ENCODE measurements at regions of chr1 and their contacts with region 1.

Region 1: GRCh38 chr1:148334339-148335130 is 148.6 kb downstream of the PPIAL4G start:
- DNase-seq: peak; percentile 99
- H3K4me3 Mint-ChIP-seq: peak overlapping the region; percentile 91
- H3K27ac Mint-ChIP-seq: peak overlapping the region; percentile 100
- H3K4me1 Mint-ChIP-seq: peaks cover 10% of the 10 kb centered on the region
- H3K27me3 Mint-ChIP-seq: no peaks in the 10 kb centered on the region
- CTCF ChIP-seq: no peak

Region 2: DNA sequence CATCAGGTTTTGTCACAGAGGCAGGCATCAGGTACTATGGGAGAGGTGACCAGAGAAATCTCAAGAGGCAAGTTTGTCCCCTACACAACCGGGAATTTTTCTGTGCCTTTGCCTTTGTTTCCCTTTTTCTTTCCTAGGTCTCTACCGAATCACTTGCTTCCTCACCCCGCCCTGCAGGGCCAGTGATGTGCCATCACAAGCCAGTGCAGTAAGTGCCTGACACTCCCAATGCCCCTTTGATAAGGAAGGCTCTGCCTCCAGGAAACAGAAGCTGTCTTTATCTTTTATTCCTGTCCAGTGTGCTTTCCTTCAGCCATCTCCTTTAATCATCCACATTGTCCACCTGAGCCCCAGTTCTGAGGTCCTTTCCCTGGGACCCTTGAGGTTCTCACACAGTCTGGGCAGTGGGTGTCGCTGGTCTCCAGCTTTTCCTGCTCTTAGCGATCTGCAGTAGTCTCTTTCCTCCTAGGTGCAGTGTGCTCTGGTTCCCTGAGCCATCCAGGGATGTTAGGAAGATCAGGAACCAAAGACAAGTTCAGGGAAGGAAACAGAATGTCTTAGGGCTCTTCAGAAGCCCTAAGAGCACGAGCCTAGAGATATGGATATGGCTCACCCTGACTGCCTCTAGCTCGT is 610.7 kb before region 1 on chr1:
- CTCF ChIA-PET with region 1: no interaction called
- POLR2A ChIA-PET with region 1: no interaction called
- intact Hi-C with region 1: no loop called
- DNase-seq: peak; percentile 72
- H3K4me3 Mint-ChIP-seq: no peak overlapping the region
- H3K27ac Mint-ChIP-seq: no peak overlapping the region
- H3K4me1 Mint-ChIP-seq: peaks cover 16% of the 10 kb centered on the region
- H3K27me3 Mint-ChIP-seq: no peaks in the 10 kb centered on the region
- CTCF ChIP-seq: peak; percentile 51

Region 3: DNA sequence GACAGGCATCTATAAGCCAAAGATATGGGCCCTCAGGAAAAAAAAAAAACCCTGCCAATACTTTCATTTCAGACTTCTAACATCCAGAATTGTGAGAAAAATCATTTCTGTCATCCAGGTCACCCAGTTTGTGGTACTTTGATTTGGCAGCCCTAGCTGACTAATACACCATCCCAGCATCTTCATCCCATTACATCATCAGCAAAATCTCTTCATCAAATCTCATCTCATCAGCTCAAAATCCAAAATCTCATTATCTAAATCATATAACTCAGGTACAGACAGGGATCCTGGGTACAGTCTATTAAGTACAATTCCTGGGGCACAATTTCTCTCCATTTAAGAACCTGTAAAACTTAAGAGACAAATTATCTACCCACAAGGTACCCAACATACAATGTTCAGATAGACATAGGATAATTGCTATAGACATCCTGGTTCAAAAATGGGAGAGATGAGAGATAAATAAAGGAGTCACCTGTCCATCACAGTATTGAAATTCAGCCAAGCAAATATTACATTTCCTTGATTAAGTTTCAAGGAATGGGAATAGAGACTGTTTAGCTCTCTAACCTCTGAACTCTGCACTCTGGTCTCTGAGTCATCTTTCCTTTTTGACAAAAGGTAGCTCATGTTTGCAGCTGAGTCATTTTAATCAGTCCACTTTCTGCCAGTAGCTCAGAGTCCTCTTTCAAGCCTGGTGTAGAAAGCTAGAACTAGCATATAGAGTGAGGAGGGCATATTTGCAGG is 483.6 kb before region 1 on chr1:
- CTCF ChIA-PET with region 1: no interaction called
- POLR2A ChIA-PET with region 1: no interaction called
- intact Hi-C with region 1: no loop called
- DNase-seq: peak; percentile 43
- H3K4me3 Mint-ChIP-seq: no peak overlapping the region
- H3K27ac Mint-ChIP-seq: no peak overlapping the region
- H3K4me1 Mint-ChIP-seq: peaks cover 8% of the 10 kb centered on the region
- H3K27me3 Mint-ChIP-seq: no peaks in the 10 kb centered on the region
- CTCF ChIP-seq: no peak

Region 4: GRCh38 chr1:148160343-148161052 is 174.0 kb before region 1 on chr1:
- CTCF ChIA-PET with region 1: no interaction called
- POLR2A ChIA-PET with region 1: no interaction called
- intact Hi-C with region 1: no loop called
- DNase-seq: no peak
- H3K4me3 Mint-ChIP-seq: no peak overlapping the region
- H3K27ac Mint-ChIP-seq: no peak overlapping the region
- H3K4me1 Mint-ChIP-seq: no peaks in the 10 kb centered on the region
- H3K27me3 Mint-ChIP-seq: peaks cover 32% of the 10 kb centered on the region
- CTCF ChIP-seq: no peak

Region 5: GRCh38 chr1:148263128-148263905 is 71.2 kb before region 1 on chr1:
- CTCF ChIA-PET with region 1: no interaction called
- POLR2A ChIA-PET with region 1: interaction called, 45 read pairs
- intact Hi-C with region 1: loop called (anchors 1 kb)
- DNase-seq: peak; percentile 99
- H3K4me3 Mint-ChIP-seq: peak overlapping the region; percentile 82
- H3K27ac Mint-ChIP-seq: peak overlapping the region; percentile 99
- H3K4me1 Mint-ChIP-seq: peaks cover 13% of the 10 kb centered on the region
- H3K27me3 Mint-ChIP-seq: no peaks in the 10 kb centered on the region
- CTCF ChIP-seq: no peak

Region 6: GRCh38 chr1:148272901-148273300 is 61.6 kb before region 1 on chr1:
- CTCF ChIA-PET with region 1: interaction called, 4 read pairs
- POLR2A ChIA-PET with region 1: interaction called, 16 read pairs
- intact Hi-C with region 1: no loop called
- DNase-seq: no peak
- H3K4me3 Mint-ChIP-seq: no peak overlapping the region
- H3K27ac Mint-ChIP-seq: no peak overlapping the region
- H3K4me1 Mint-ChIP-seq: peaks cover 10% of the 10 kb centered on the region
- H3K27me3 Mint-ChIP-seq: no peaks in the 10 kb centered on the region
- CTCF ChIP-seq: no peak

Region 7: DNA sequence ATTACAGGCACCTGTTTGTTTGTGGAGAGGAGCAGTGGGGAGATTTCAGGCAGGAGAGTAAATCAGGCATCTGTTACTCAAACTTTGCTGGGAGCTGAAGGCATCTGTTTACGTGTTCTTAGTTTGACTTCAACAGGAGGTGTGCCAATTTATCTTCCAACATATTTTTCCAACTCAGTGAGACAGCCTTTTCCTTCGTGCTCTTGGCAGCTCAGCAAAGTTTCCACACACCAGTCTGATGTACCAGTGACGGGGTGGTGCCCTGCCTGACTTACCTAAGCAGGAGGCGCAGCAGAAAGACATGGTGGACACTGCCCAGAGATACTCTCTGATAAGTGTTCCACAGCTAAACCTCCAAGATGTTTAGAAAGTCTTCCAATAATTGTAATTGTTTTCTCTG is 28.2 kb before region 1 on chr1:
- CTCF ChIA-PET with region 1: no interaction called
- POLR2A ChIA-PET with region 1: no interaction called
- intact Hi-C with region 1: no loop called
- DNase-seq: peak; percentile 34
- H3K4me3 Mint-ChIP-seq: no peak overlapping the region
- H3K27ac Mint-ChIP-seq: peak overlapping the region; percentile 50
- H3K4me1 Mint-ChIP-seq: peaks cover 20% of the 10 kb centered on the region
- H3K27me3 Mint-ChIP-seq: peaks cover 17% of the 10 kb centered on the region
- CTCF ChIP-seq: no peak

Region 8: GRCh38 chr1:148318123-148318903 is 16.2 kb before region 1 on chr1:
- CTCF ChIA-PET with region 1: interaction called, 6 read pairs
- POLR2A ChIA-PET with region 1: interaction called, 15 read pairs
- intact Hi-C with region 1: no loop called
- DNase-seq: no peak
- H3K4me3 Mint-ChIP-seq: no peak overlapping the region
- H3K27ac Mint-ChIP-seq: no peak overlapping the region
- H3K4me1 Mint-ChIP-seq: peaks cover 6% of the 10 kb centered on the region
- H3K27me3 Mint-ChIP-seq: no peaks in the 10 kb centered on the region
- CTCF ChIP-seq: no peak

Region 9: DNA sequence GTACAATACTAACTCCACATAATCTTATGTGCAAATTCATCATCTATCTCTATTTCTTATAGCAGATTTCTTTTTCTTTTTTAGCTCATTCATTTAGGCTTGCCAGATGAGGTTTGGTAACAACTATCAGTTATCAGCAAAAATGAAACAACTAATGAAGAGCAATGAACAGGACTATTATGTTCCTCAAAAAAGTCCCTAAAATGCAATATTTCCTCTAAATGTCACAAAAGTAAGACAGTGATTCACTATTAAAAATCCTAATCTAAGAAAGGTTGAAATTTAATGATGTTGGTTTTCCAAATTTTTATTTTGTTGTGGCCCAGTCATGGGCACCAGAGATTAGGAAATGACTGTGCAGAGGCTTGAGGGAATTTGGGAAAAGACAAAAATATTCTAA is 13.2 kb after region 1 on chr1:
- CTCF ChIA-PET with region 1: interaction called, 37 read pairs
- POLR2A ChIA-PET with region 1: interaction called, 5 read pairs
- intact Hi-C with region 1: no loop called
- DNase-seq: no peak
- H3K4me3 Mint-ChIP-seq: no peak overlapping the region
- H3K27ac Mint-ChIP-seq: no peak overlapping the region
- H3K4me1 Mint-ChIP-seq: peaks cover 9% of the 10 kb centered on the region
- H3K27me3 Mint-ChIP-seq: peaks cover 72% of the 10 kb centered on the region
- CTCF ChIP-seq: no peak

Measured in MCF 10A (cell line).